ENCODE measurements at regions of chr12 and their contacts with region 1.

Region 1: DNA sequence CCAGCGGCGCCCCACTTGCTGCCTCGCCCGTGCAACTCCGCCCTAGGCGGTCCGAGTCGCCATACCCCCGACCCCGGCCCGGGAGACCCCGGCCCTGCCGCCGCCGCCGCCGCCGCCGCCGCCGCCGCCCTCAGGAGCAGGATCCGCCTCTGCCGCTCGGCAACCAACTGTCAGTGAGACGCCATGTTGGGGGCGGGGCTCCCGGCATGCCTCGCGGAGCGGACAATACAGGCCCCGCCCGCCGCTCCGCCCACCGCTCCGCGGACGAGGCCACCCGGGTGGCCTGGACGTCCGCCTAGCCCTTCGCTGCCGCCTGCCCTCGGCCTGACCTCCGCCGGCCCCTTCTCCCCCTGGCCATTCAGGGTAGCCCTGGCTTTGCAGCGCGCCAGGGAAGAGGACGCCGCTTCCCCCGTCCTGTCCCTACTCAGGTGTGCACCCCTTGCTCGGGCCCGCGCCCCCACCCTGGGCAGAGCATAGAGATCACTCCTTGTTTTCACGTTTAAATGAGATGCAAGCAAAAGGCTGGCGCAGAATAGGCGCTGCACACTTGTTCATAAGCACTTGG is at the start of gene HECTD4:
- DNase-seq: peak; percentile 95
- H3K4me3 Mint-ChIP-seq: peak within 1 kb of the TSS; percentile 91
- H3K27ac Mint-ChIP-seq: peak within 1 kb of the TSS; percentile 75
- H3K4me1 Mint-ChIP-seq: peaks cover 31% of the 10 kb centered on the region
- H3K27me3 Mint-ChIP-seq: no peaks in the 10 kb centered on the region
- total RNA-seq, gene HECTD4: 24.0 to 24.4 TPM

Region 2: GRCh38 chr12:111841750-111842555 is 540.4 kb before region 1 on chr12 and contains the start of gene MAPKAPK5:
- CTCF ChIA-PET with region 1: no interaction called
- POLR2A ChIA-PET with region 1: no interaction called
- intact Hi-C with region 1: loop called (anchors 10 kb)
- DNase-seq: peak; percentile 98
- H3K4me3 Mint-ChIP-seq: peak within 1 kb of the TSS; percentile 98
- H3K27ac Mint-ChIP-seq: peak within 1 kb of the TSS; percentile 95
- H3K4me1 Mint-ChIP-seq: peaks cover 56% of the 10 kb centered on the region
- H3K27me3 Mint-ChIP-seq: no peaks in the 10 kb centered on the region
- total RNA-seq, gene MAPKAPK5: 53.7 to 53.9 TPM

Region 3: DNA sequence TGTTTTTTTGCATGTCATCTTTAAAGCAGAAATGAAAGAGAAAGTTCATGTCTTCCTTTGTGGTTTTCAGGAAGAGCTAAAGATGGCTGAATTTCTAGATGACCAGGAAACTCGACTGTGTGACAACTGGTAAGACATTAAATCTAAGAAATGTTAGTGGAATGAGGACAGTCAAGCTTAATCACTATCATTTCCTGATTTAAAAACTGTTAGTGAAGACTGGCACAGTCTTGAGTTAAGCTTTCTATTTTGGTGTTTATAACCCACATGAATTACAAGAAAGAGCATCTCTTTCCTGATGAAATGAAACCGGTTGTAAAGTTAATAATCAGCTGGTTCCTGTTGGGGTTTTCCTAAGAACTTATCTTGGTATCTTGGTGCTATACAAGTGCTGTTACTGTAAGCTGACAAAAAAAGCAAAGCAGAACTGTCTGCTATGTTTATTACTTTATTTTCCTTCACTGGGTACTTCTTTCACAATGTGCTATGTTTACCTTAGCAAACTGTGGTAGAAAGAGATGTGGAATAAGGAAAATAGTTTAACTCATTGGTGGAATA is 251.8 kb before region 1 on chr12:
- CTCF ChIA-PET with region 1: interaction called, 3 read pairs
- POLR2A ChIA-PET with region 1: no interaction called
- intact Hi-C with region 1: loop called (anchors 5 kb)
- DNase-seq: no peak
- H3K4me3 Mint-ChIP-seq: peak overlapping the region; percentile 55
- H3K27ac Mint-ChIP-seq: peak overlapping the region; percentile 76
- H3K4me1 Mint-ChIP-seq: peaks cover 56% of the 10 kb centered on the region
- H3K27me3 Mint-ChIP-seq: no peaks in the 10 kb centered on the region

Region 4: GRCh38 chr12:112198120-112198733 is 184.1 kb before region 1 on chr12:
- CTCF ChIA-PET with region 1: interaction called, 72 read pairs
- POLR2A ChIA-PET with region 1: interaction called, 6 read pairs
- intact Hi-C with region 1: loop called (anchors 1 kb)
- DNase-seq: peak; percentile 70
- H3K4me3 Mint-ChIP-seq: no peak overlapping the region
- H3K27ac Mint-ChIP-seq: no peak overlapping the region
- H3K4me1 Mint-ChIP-seq: no peaks in the 10 kb centered on the region
- H3K27me3 Mint-ChIP-seq: no peaks in the 10 kb centered on the region

Region 5: GRCh38 chr12:112409064-112409905 is 27.0 kb after region 1 on chr12 and contains the start of gene RPL6:
- CTCF ChIA-PET with region 1: interaction called, 6 read pairs
- POLR2A ChIA-PET with region 1: no interaction called
- intact Hi-C with region 1: loop called (anchors 1 kb)
- DNase-seq: peak; percentile 86
- H3K4me3 Mint-ChIP-seq: peak within 1 kb of the TSS; percentile 100
- H3K27ac Mint-ChIP-seq: peak within 1 kb of the TSS; percentile 100
- H3K4me1 Mint-ChIP-seq: peaks cover 37% of the 10 kb centered on the region
- H3K27me3 Mint-ChIP-seq: no peaks in the 10 kb centered on the region
- total RNA-seq, gene RPL6: 1,833 TPM